Caco-2 (cell line): ENCODE measurements at regions of chr22 and their contacts with region 1.

Region 1: GRCh38 chr22:30444632-30445437 is 19.3 kb downstream of the MTFP1 start:
- DNase-seq: peak; percentile 69 to 80
- H3K4me3 ChIP-seq: no peak overlapping the region
- H3K4me3 Mint-ChIP-seq: no peak overlapping the region
- H3K27ac Mint-ChIP-seq: no peak overlapping the region
- H3K4me1 ChIP-seq: peaks cover 4% of the 10 kb centered on the region; the same call in 1 of the 2 replicates
- H3K4me1 Mint-ChIP-seq: peaks cover 4% of the 10 kb centered on the region
- H3K27me3 ChIP-seq: no peaks in the 10 kb centered on the region
- H3K27me3 Mint-ChIP-seq: no peaks in the 10 kb centered on the region
- CTCF ChIP-seq: peak; percentile 77 to 84

Region 2: DNA sequence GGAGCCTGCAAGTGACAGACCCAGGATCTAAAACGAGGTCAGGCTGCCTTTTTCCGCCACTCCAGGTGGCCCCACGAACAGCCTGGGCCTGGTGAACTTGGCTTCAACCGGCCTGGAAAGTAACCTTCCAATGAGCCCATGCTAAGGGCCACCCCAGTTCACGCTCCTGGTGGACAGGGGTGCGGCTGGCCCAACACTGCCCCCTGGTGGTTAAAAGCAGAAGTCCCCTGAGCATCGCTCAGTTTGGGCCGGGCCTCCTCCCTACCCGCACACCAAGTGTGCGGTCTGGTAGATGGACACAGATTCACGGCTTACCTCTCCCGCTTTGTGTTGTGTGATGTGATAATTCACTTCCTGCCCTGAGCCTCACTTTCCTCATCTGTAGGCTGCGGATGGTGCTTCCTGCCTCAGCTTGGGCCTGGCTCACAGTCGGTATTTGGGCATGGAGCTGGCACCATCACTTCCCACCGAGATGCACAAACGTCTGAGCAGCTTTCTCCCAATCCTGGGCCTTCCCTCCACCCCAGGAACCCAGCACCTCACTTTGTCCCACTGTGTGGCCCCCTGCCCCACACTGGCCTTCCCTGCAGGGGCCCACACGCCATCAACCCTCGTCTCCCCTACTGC is 40.6 kb after region 1 on chr22:
- CTCF ChIA-PET with region 1: interaction called, 9 read pairs
- POLR2A ChIA-PET with region 1: no interaction called
- intact Hi-C with region 1: loop called (anchors 1 kb)
- DNase-seq: peak; percentile 62 to 82
- H3K4me3 ChIP-seq: no peak overlapping the region
- H3K4me3 Mint-ChIP-seq: no peak overlapping the region
- H3K27ac Mint-ChIP-seq: no peak overlapping the region
- H3K4me1 ChIP-seq: no peaks in the 10 kb centered on the region
- H3K4me1 Mint-ChIP-seq: no peaks in the 10 kb centered on the region
- H3K27me3 ChIP-seq: no peaks in the 10 kb centered on the region
- H3K27me3 Mint-ChIP-seq: peaks cover 5% of the 10 kb centered on the region
- CTCF ChIP-seq: peak; percentile 89 to 96

Region 3: DNA sequence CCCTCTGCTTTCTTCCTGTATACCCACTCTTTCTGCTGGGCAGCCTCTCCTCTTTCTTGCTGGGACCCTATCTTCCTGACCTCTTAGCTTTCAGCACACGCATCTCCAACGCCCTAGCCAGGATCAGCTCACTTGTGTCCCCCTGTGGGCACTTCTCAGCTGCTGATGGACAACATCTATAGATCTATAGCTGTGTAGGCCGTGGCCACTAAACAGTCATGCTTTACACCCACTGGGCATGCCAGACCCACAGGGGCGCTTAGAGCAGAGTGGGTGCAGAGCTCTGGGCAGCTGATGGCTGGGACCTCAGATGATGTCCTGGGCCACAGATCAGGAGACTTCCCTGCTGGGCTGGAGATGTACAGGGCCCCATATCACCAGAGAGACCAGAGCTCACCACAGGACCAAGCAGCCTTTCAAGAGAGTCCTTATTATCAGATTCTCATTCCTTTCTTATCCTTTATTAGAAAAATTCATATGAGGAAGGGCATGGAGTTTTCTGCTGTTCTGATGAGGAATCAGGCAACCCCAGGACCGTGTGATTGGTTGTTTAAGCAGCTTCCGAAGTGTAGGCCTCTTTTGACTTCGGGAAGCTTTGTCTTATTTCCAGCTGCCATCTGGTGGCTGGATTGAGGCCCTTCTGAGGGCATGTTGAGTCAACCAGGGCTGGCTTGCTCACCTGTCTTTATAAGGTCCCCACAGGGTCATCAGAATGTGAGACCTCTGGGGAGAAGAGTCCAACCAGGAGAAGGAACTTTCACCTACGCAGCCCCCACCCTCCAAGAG is 310.3 kb after region 1 on chr22:
- CTCF ChIA-PET with region 1: no interaction called
- POLR2A ChIA-PET with region 1: no interaction called
- intact Hi-C with region 1: loop called (anchors 10 kb)
- DNase-seq: peak; percentile 69 to 71
- H3K4me3 ChIP-seq: no peak overlapping the region
- H3K4me3 Mint-ChIP-seq: no peak overlapping the region
- H3K27ac Mint-ChIP-seq: no peak overlapping the region
- H3K4me1 ChIP-seq: no peaks in the 10 kb centered on the region
- H3K4me1 Mint-ChIP-seq: peaks cover 6% of the 10 kb centered on the region
- H3K27me3 ChIP-seq: no peaks in the 10 kb centered on the region
- H3K27me3 Mint-ChIP-seq: peaks cover 8% of the 10 kb centered on the region
- CTCF ChIP-seq: peak; percentile 22 to 83